ENCODE measurements at regions of chr2 and their contacts with region 1.

Region 1: GRCh38 chr2:112920923-112921532 is 10.1 kb downstream of the IL37 start:
- DNase-seq: no peak
- H3K4me3 Mint-ChIP-seq: no peak overlapping the region
- H3K27ac Mint-ChIP-seq: no peak overlapping the region
- H3K4me1 Mint-ChIP-seq: no peaks in the 10 kb centered on the region
- H3K27me3 Mint-ChIP-seq: peaks cover 14% of the 10 kb centered on the region

Region 2: DNA sequence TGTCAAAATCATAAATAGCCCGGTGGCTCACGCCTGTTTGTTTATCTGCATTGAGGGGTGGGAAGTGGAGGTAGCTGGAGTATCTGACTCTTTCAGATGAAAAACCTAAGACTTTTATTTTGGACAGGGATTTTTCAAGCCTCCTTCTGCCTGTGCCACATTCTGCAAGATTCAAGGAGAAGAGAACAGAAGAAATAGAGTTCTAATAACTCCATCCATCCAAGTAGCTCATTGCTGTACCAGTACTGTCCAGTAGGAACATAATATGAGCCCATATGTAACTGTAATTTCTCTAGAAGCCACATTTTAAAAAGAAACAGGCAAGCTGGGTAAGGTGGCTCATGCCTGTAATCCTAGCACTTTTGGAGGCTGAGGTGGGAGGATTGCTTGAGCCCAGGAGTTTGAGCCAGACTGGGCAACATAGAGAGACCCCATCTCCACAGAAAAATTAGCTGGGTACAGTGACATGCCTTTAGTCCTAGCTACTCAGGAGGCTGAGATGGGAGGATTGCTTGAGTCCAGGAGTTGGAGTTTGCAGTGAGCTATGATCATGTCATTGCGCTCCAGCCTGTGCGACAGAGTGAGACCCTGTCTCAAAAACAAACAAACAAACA is 235.7 kb before region 1 on chr2:
- CTCF ChIA-PET with region 1: no interaction called
- DNase-seq: no peak
- H3K4me3 Mint-ChIP-seq: no peak overlapping the region
- H3K27ac Mint-ChIP-seq: no peak overlapping the region
- H3K4me1 Mint-ChIP-seq: peaks cover 29% of the 10 kb centered on the region
- H3K27me3 Mint-ChIP-seq: peaks cover 17% of the 10 kb centered on the region

Region 3: GRCh38 chr2:112884869-112885505 is 36.0 kb before region 1 on chr2:
- CTCF ChIA-PET with region 1: interaction called, 12 read pairs
- DNase-seq: peak; percentile 78
- H3K4me3 Mint-ChIP-seq: no peak overlapping the region
- H3K27ac Mint-ChIP-seq: peak overlapping the region; percentile 43
- H3K4me1 Mint-ChIP-seq: peaks cover 27% of the 10 kb centered on the region
- H3K27me3 Mint-ChIP-seq: peaks cover 10% of the 10 kb centered on the region

Region 4: GRCh38 chr2:112906276-112906675 is 14.8 kb before region 1 on chr2:
- CTCF ChIA-PET with region 1: no interaction called
- DNase-seq: no peak
- H3K4me3 Mint-ChIP-seq: no peak overlapping the region
- H3K27ac Mint-ChIP-seq: no peak overlapping the region
- H3K4me1 Mint-ChIP-seq: no peaks in the 10 kb centered on the region
- H3K27me3 Mint-ChIP-seq: peaks cover 12% of the 10 kb centered on the region

Region 5: DNA sequence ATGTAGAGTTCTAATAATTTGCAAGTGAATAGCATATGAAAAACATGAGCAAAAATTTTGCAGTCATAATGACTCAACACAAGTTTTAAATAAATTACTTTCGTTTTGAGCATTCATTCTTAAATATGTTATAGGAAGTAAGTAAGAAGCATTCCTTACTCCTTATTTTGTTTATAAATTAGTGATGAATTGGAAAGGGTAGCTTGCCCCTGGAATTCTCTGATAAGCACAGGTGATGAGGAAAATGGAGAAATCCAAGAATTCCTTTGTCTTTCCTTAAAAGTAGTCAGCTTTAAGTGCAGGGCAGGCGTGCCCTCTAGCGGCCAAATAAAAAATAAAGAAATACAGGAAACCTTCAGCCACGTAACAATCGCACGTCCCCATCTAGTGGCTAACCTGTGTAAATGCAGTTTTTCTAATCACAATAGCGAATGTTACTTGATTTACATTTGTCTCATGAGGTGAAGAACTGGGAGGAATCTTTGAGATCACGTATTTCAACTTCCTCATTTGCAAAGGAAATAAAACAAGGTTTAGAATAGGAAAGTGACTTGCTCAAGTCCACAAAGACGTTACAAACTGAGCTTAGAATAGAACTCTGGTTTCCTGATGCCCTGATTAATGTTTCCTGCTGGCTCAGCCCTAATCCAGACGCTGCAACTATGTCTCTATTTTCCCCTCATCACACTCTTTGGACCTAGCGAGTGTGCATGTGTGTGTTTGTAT is 469.3 kb after region 1 on chr2:
- CTCF ChIA-PET with region 1: no interaction called
- DNase-seq: peak; percentile 63
- H3K4me3 Mint-ChIP-seq: peak overlapping the region; percentile 53
- H3K27ac Mint-ChIP-seq: peak overlapping the region; percentile 78
- H3K4me1 Mint-ChIP-seq: peaks cover 15% of the 10 kb centered on the region
- H3K27me3 Mint-ChIP-seq: peaks cover 23% of the 10 kb centered on the region

Measured in activated naive CD4-positive, alpha-beta T cell treated with anti-CD3 and anti-CD28 coated beads, Interleukin-2, amount 10 ng/mL, durations not matched to agents 7 days and 5 days (primary cell).